ENCODE measurements at regions of chr3 and their contacts with region 1.

Region 1: GRCh38 chr3:186783073-186783730 is at the start of gene EIF4A2:
- DNase-seq: peak; percentile 76 to 95 (median 87)
- ATAC-seq: peak; percentile 71 to 77 (median 76)
- H3K4me3 ChIP-seq: peak within 1 kb of the TSS; percentile 84 to 100
- H3K4me3 Mint-ChIP-seq: peak within 1 kb of the TSS; percentile 98 to 100 (median 100)
- H3K27ac ChIP-seq: peak within 1 kb of the TSS; percentile 96
- H3K27ac Mint-ChIP-seq: peak within 1 kb of the TSS; percentile 98 to 100
- H3K4me1 ChIP-seq: peaks cover 27 to 38% of the 10 kb centered on the region in 2 experiments
- H3K4me1 Mint-ChIP-seq: peaks cover 48 to 53% (median 52%) of the 10 kb centered on the region in 3 donors
- H3K27me3 ChIP-seq: no peaks in the 10 kb centered on the region
- H3K27me3 Mint-ChIP-seq: peaks cover 0 to 2% of the 10 kb centered on the region in 2 donors
- total RNA-seq, gene EIF4A2: 544 to 870 (median 576) TPM

Region 2: GRCh38 chr3:186570096-186570940 is 212.9 kb before region 1 on chr3 and contains the start of gene DNAJB11:
- CTCF ChIA-PET with region 1: interaction called in 1 of 2 experiments, 3 read pairs
- POLR2A ChIA-PET with region 1: interaction called, 3 to 22 read pairs
- DNase-seq: peak; percentile 87 to 100 (median 99)
- ATAC-seq: peak; percentile 85 to 87 (median 86)
- H3K4me3 ChIP-seq: peak within 1 kb of the TSS; percentile 77 to 88
- H3K4me3 Mint-ChIP-seq: peak within 1 kb of the TSS; percentile 88 to 92 (median 90)
- H3K27ac ChIP-seq: peak within 1 kb of the TSS; percentile 80
- H3K27ac Mint-ChIP-seq: peak within 1 kb of the TSS; percentile 96 to 98
- H3K4me1 ChIP-seq: peaks cover 25 to 36% of the 10 kb centered on the region in 2 experiments
- H3K4me1 Mint-ChIP-seq: peaks cover 63 to 68% (median 64%) of the 10 kb centered on the region in 3 donors
- H3K27me3 ChIP-seq: no peaks in the 10 kb centered on the region
- H3K27me3 Mint-ChIP-seq: no peaks in the 10 kb centered on the region
- total RNA-seq, gene DNAJB11: 28.7 to 65.4 (median 31.7) TPM

Region 3: GRCh38 chr3:186705882-186706780 is 77.1 kb before region 1 on chr3:
- CTCF ChIA-PET with region 1: no interaction called
- POLR2A ChIA-PET with region 1: interaction called in 1 of 2 experiments, 12 read pairs
- DNase-seq: peak in 27 of 35 experiments; percentile 2 to 65 (median 18)
- ATAC-seq: peak in 2 of 4 experiments; percentile 33 to 62
- H3K4me3 ChIP-seq: no peak overlapping the region
- H3K4me3 Mint-ChIP-seq: no peak overlapping the region
- H3K27ac ChIP-seq: no peak overlapping the region
- H3K27ac Mint-ChIP-seq: no peak overlapping the region
- H3K4me1 ChIP-seq: peaks cover 0 to 9% of the 10 kb centered on the region in 2 experiments
- H3K4me1 Mint-ChIP-seq: peaks cover 0 to 10% (median 4%) of the 10 kb centered on the region in 3 donors
- H3K27me3 ChIP-seq: peaks cover 0 to 6% of the 10 kb centered on the region in 2 experiments
- H3K27me3 Mint-ChIP-seq: peaks cover 14 to 45% of the 10 kb centered on the region in 2 donors

Region 4: DNA sequence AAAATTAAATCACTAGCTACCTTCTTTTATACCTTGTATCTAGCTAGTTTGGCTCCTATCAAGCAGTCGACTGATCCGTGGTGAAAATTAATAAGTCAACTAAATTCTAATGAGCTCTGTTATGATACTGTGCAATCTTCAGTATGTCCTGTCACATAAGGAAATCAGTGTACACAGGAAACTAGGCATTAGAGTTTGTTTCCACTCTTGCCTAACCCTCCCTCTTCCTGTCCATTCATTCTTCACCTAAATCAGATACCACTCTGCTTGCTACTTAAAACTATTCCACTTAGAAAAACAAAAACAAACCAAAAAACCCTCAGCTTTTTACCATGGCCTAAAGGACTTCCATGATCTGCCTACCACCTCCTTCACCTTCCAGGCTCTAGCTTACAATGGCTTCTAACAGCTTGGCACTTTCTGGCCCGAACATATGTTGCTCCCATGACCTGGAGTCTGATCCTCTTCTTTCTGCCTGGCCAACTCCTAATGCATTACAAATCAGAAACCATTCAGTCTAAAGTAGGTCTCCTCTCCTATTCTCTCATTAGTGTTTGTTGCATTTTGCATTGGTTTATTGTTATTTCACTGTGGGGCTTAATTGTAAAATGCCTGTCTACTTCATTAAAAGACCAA is 15.2 kb after region 1 on chr3:
- CTCF ChIA-PET with region 1: interaction called in 1 of 2 experiments, 4 read pairs
- POLR2A ChIA-PET with region 1: interaction called, 4 to 11 read pairs
- DNase-seq: no peak
- ATAC-seq: no peak
- H3K4me3 ChIP-seq: no peak overlapping the region
- H3K4me3 Mint-ChIP-seq: no peak overlapping the region
- H3K27ac ChIP-seq: no peak overlapping the region
- H3K27ac Mint-ChIP-seq: no peak overlapping the region
- H3K4me1 ChIP-seq: peaks cover 3 to 7% of the 10 kb centered on the region in 2 experiments
- H3K4me1 Mint-ChIP-seq: peaks cover 19 to 20% (median 20%) of the 10 kb centered on the region in 3 donors
- H3K27me3 ChIP-seq: no peaks in the 10 kb centered on the region
- H3K27me3 Mint-ChIP-seq: no peaks in the 10 kb centered on the region

Region 5: GRCh38 chr3:186806089-186807055 is 23.2 kb after region 1 on chr3 and contains the start of gene RFC4:
- CTCF ChIA-PET with region 1: no interaction called
- POLR2A ChIA-PET with region 1: interaction called, 3 to 18 read pairs
- DNase-seq: peak; percentile 65 to 90 (median 81)
- ATAC-seq: peak; percentile 89 to 93 (median 92)
- H3K4me3 ChIP-seq: peak within 1 kb of the TSS; percentile 98 to 99
- H3K4me3 Mint-ChIP-seq: peak within 1 kb of the TSS; percentile 89 to 95 (median 95)
- H3K27ac ChIP-seq: peak within 1 kb of the TSS; percentile 90
- H3K27ac Mint-ChIP-seq: peak within 1 kb of the TSS; percentile 92 to 95
- H3K4me1 ChIP-seq: peaks cover 12 to 20% of the 10 kb centered on the region in 2 experiments
- H3K4me1 Mint-ChIP-seq: peaks cover 8 to 27% (median 24%) of the 10 kb centered on the region in 3 donors
- H3K27me3 ChIP-seq: no peaks in the 10 kb centered on the region
- H3K27me3 Mint-ChIP-seq: no peaks in the 10 kb centered on the region
- total RNA-seq, gene RFC4: 13.4 to 21.0 (median 19.2) TPM